ENCODE measurements at regions of chr17 and their contacts with region 1.

Region 1: DNA sequence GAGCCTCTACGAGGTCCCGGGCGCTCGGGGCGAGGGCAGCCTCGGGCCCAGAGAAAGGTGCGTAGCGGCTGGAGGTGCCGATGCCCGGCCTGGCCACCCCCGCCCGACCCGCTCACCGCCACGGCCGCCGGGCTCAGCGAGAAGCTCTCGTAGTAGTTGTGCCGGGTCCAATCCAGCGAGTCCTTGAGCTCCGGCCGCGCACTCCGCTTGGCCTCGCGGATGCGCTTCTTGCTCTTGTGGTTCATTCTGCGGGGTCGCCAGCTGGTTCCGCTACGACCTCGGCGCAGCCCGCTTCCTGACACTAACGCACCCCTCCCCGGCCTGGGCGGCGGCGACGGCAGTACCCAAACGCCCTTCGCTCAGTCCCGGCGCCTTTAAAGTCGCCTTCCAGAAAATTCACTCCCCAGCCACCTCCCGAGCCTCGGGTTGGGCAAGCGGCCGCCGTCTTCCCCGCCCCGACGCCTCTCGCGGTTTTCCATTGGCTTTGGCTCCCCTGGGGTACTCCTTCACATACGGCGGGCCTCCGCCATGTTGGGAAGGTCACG is at the start of gene JMJD6:
- DNase-seq: peak in 5 of 9 donors; percentile 92 to 95 (median 93)
- ATAC-seq: peak; percentile 88
- H3K4me3 ChIP-seq: peak within 1 kb of the TSS; percentile 90
- H3K4me3 Mint-ChIP-seq: peak within 1 kb of the TSS; percentile 93 to 100 (median 98)
- H3K27ac ChIP-seq: peak within 1 kb of the TSS; percentile 97
- H3K27ac Mint-ChIP-seq: peak within 1 kb of the TSS; percentile 98 to 99 (median 99)
- H3K4me1 ChIP-seq: peaks cover 36 to 45% of the 10 kb centered on the region in 2 donors
- H3K4me1 Mint-ChIP-seq: peaks cover 19 to 76% (median 43%) of the 10 kb centered on the region in 7 donors
- H3K27me3 ChIP-seq: no peaks in the 10 kb centered on the region
- H3K27me3 Mint-ChIP-seq: no peaks in the 10 kb centered on the region
- total RNA-seq, gene JMJD6: 39.9 to 132 (median 58.3) TPM

Region 2: DNA sequence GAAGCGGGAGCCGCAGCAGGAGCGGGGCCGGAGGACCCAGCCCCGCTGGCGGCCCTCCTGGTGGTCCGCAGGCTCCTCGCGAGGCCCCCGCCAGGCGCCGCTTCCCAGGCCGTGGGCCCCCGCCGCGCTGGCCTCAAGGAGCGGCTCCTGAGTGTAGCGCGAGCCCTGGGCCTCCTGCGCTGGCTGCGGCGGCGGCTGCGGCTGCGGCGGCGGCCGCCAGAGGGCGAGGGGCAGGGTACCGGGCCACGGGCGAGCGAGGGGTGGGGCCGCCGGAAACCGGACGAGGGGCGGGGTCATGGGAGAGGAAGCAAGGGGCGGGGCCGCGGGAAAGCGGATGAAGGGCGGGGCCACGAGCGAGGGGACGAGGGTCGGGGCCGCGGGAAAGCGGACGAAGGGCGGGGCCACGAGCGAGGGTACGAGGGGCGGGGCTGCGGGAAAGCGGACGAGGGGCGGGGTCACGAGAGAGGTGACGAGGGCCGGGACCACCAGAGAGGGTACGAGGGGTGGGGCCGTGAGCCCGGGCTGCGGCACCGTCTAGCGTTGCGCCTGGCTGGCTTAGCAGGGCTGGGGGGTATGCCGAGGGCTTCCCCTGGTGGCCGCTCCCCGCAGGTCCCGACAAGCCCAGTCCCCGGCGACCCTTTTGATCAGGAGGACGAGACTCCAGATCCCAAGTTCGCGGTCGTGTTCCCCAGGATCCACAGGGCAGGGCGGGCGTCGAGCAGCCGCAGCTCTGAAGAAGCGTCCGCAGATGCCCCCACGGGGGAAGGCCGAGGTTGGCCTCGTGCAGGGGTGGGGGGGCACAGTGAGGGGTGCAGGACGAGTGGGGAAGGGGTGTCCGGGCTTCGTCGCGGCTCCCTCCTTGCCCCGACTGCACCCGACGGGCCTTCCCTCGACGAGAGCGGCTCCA is 1137.0 kb before region 1 on chr17:
- CTCF ChIA-PET with region 1: no interaction called
- POLR2A ChIA-PET with region 1: no interaction called
- intact Hi-C with region 1: loop called in 1 of 2 experiments (anchors 5 kb)
- DNase-seq: peak; percentile 81 to 98 (median 93)
- ATAC-seq: peak; percentile 94
- H3K4me3 ChIP-seq: peak overlapping the region; percentile 53
- H3K4me3 Mint-ChIP-seq: peak overlapping the region; percentile 57 to 95 (median 82)
- H3K27ac ChIP-seq: peak overlapping the region; percentile 83
- H3K27ac Mint-ChIP-seq: peak overlapping the region in 6 of 9 donors; percentile 59 to 95 (median 86)
- H3K4me1 ChIP-seq: peaks cover 0 to 2% of the 10 kb centered on the region in 2 donors
- H3K4me1 Mint-ChIP-seq: peaks cover 0 to 17% (median 11%) of the 10 kb centered on the region in 7 donors
- H3K27me3 ChIP-seq: no peaks in the 10 kb centered on the region
- H3K27me3 Mint-ChIP-seq: peaks cover 0 to 31% (median 0%) of the 10 kb centered on the region in 5 donors

Region 3: DNA sequence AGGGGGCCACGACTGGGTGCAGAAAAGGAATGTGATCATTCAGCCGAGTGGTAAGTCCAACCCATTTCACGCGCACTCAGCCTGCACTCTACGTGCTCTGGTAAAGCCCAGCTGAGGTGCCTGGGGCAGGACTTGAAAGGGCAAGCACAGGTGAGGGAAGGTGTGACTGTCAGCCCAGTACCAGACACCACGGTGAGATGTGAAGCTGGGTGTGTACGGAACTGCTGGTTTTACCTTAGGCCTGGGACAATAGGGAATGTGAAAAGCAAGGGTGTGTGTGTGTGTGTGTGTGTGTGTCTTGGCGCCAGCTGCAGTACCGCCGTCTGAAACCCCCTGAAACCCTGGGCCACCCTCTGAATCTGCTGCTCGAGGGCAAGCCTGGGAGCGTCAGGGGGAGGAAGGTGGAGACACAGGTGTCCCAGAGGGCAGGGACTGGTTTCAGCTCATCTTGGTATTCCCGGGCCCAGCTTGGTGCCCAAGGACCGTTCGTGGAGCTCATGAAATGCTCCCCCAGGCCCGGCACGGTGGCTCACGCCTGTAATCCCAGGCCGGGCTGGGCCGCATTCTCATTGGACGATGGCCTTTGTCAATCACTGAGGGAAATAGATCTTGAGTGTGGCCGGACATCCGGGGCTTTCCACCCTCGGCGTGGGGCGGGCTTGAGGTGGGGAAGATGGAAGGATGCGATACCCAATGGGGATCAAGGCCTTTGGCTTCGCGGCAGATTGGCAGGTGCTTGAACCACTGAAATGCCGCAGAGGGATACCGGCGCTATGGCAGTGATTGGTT is 55.0 kb before region 1 on chr17:
- CTCF ChIA-PET with region 1: no interaction called
- POLR2A ChIA-PET with region 1: interaction called, 9 read pairs
- intact Hi-C with region 1: loop called (anchors 1 kb)
- DNase-seq: peak; percentile 90 to 99 (median 98)
- ATAC-seq: peak; percentile 99
- H3K4me3 ChIP-seq: peak overlapping the region; percentile 76
- H3K4me3 Mint-ChIP-seq: peak overlapping the region; percentile 81 to 98 (median 92)
- H3K27ac ChIP-seq: peak overlapping the region; percentile 84
- H3K27ac Mint-ChIP-seq: peak overlapping the region; percentile 88 to 99 (median 96)
- H3K4me1 ChIP-seq: peaks cover 19 to 26% of the 10 kb centered on the region in 2 donors
- H3K4me1 Mint-ChIP-seq: peaks cover 20 to 43% (median 31%) of the 10 kb centered on the region in 7 donors
- H3K27me3 ChIP-seq: no peaks in the 10 kb centered on the region
- H3K27me3 Mint-ChIP-seq: peaks cover 0 to 10% (median 0%) of the 10 kb centered on the region in 5 donors

Region 4: GRCh38 chr17:76753061-76753961 is 27.0 kb after region 1 on chr17:
- CTCF ChIA-PET with region 1: no interaction called
- POLR2A ChIA-PET with region 1: interaction called, 6 read pairs
- intact Hi-C with region 1: loop called in 1 of 2 experiments (anchors 1 kb)
- DNase-seq: peak in 8 of 9 donors; percentile 18 to 93 (median 86)
- ATAC-seq: peak; percentile 93
- H3K4me3 ChIP-seq: peak overlapping the region; percentile 55
- H3K4me3 Mint-ChIP-seq: peak overlapping the region; percentile 84 to 91 (median 89)
- H3K27ac ChIP-seq: peak overlapping the region; percentile 83
- H3K27ac Mint-ChIP-seq: peak overlapping the region; percentile 96 to 99 (median 99)
- H3K4me1 ChIP-seq: peaks cover 14 to 20% of the 10 kb centered on the region in 2 donors
- H3K4me1 Mint-ChIP-seq: peaks cover 19 to 30% (median 28%) of the 10 kb centered on the region in 7 donors
- H3K27me3 ChIP-seq: no peaks in the 10 kb centered on the region
- H3K27me3 Mint-ChIP-seq: no peaks in the 10 kb centered on the region

Region 5: GRCh38 chr17:76843703-76844484 is 117.6 kb after region 1 on chr17:
- CTCF ChIA-PET with region 1: no interaction called
- POLR2A ChIA-PET with region 1: interaction called, 3 read pairs
- intact Hi-C with region 1: loop called in 1 of 2 experiments (anchors 1 kb)
- DNase-seq: no peak
- ATAC-seq: no peak
- H3K4me3 ChIP-seq: no peak overlapping the region
- H3K4me3 Mint-ChIP-seq: no peak overlapping the region
- H3K27ac ChIP-seq: no peak overlapping the region
- H3K27ac Mint-ChIP-seq: no peak overlapping the region
- H3K4me1 ChIP-seq: peaks cover 2 to 5% of the 10 kb centered on the region in 2 donors
- H3K4me1 Mint-ChIP-seq: peaks cover 9 to 25% (median 17%) of the 10 kb centered on the region in 7 donors
- H3K27me3 ChIP-seq: peaks cover 0 to 12% of the 10 kb centered on the region in 2 donors
- H3K27me3 Mint-ChIP-seq: peaks cover 54 to 72% (median 62%) of the 10 kb centered on the region in 5 donors

Region 6: DNA sequence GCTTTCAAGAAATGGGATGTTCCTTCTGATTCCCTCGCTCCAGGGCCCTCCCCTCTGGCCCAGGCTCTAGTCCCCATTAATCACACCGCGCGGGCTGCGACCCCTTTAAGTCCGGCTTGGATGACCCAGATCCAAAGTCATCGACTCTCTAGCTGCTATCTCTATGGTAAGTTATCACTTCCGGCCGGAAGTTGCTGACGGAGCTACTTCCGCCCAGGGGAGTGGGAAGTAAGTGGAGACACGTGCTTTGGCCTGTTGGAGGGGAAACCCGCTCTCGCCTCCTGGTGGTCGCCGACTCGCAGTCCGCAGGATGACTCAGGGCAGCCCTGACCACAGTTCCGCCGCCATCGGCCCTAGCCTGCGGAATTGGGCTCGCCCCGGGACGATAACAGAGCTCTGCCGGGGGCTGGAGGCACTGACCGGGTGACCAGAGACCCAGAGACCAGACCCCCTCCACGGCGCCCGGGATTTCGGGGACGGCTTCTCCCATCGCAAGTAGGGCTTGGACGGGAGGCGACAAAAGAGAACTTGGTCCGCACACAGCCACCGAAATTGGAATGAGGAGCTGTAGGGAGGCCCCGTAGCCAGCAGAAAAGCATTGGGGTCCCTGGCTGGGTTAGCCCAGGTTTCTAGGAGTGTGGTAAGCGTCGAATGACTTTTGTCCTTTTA is 362.3 kb after region 1 on chr17:
- CTCF ChIA-PET with region 1: no interaction called
- POLR2A ChIA-PET with region 1: interaction called, 6 read pairs
- intact Hi-C with region 1: loop called in 1 of 2 experiments (anchors 2 kb)
- DNase-seq: peak; percentile 61 to 86 (median 84)
- ATAC-seq: peak; percentile 96
- H3K4me3 ChIP-seq: peak overlapping the region; percentile 62
- H3K4me3 Mint-ChIP-seq: peak overlapping the region; percentile 89 to 100 (median 97)
- H3K27ac ChIP-seq: peak overlapping the region; percentile 89
- H3K27ac Mint-ChIP-seq: peak overlapping the region; percentile 91 to 100 (median 98)
- H3K4me1 ChIP-seq: peaks cover 23 to 31% of the 10 kb centered on the region in 2 donors
- H3K4me1 Mint-ChIP-seq: peaks cover 29 to 63% (median 51%) of the 10 kb centered on the region in 7 donors
- H3K27me3 ChIP-seq: no peaks in the 10 kb centered on the region
- H3K27me3 Mint-ChIP-seq: peaks cover 0 to 6% (median 0%) of the 10 kb centered on the region in 5 donors

Measured in naive thymus-derived CD4-positive, alpha-beta T cell (primary cell).